AG04450 (cell line): ENCODE measurements at regions of chr2 and their contacts with region 1.

Region 1: DNA sequence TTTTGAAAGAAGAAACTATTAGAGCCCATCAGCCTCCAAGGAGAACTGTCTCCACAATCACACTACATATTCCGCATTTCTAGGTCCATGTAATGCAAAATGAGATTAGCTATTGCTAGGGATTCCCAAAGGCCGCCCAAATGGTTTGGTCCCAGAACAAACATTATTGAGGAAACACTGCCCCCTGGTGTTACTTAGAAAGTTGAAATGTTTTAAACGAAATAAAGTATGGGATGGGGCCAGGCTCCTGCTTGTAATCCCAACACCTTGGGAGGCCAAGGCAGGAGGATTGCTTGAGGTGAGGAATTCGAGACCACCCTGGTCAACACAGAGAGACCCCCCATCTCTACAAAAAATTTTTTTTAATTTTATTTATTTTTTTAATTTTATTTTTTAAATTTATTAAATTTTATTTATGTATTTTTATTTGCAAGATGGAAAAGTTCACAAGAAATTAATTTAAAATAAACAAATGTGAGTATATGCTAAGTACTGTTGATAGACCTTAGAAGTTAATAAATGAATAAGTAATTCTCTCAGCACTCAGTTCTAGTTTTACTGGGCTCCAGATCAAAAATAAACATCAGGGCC is 5.5 kb downstream of the NHEJ1 start:
- DNase-seq: peak; percentile 34
- H3K4me3 ChIP-seq: no peak overlapping the region
- H3K27ac ChIP-seq: no peak overlapping the region
- H3K27me3 ChIP-seq: no peaks in the 10 kb centered on the region
- CTCF ChIP-seq: peak; percentile 58

Region 2: GRCh38 chr2:218876562-218877219 is 278.5 kb before region 1 on chr2:
- CTCF ChIA-PET with region 1: interaction called, 14 read pairs
- POLR2A ChIA-PET with region 1: no interaction called
- DNase-seq: no peak
- H3K4me3 ChIP-seq: no peak overlapping the region
- H3K27ac ChIP-seq: no peak overlapping the region
- H3K27me3 ChIP-seq: peaks cover 83% of the 10 kb centered on the region
- CTCF ChIP-seq: peak; percentile 97

Region 3: GRCh38 chr2:218962859-218963492 is 192.2 kb before region 1 on chr2:
- CTCF ChIA-PET with region 1: no interaction called
- POLR2A ChIA-PET with region 1: no interaction called
- DNase-seq: no peak
- H3K4me3 ChIP-seq: peak overlapping the region; percentile 41
- H3K27ac ChIP-seq: peak overlapping the region; percentile 85
- H3K27me3 ChIP-seq: peaks cover 41% of the 10 kb centered on the region
- CTCF ChIP-seq: no peak

Region 4: GRCh38 chr2:218979846-218980734 is 175.1 kb before region 1 on chr2:
- CTCF ChIA-PET with region 1: interaction called, 13 read pairs
- POLR2A ChIA-PET with region 1: no interaction called
- DNase-seq: no peak
- H3K4me3 ChIP-seq: peak overlapping the region; percentile 42
- H3K27ac ChIP-seq: no peak overlapping the region
- H3K27me3 ChIP-seq: peaks cover 69% of the 10 kb centered on the region
- CTCF ChIP-seq: peak; percentile 86

Region 5: DNA sequence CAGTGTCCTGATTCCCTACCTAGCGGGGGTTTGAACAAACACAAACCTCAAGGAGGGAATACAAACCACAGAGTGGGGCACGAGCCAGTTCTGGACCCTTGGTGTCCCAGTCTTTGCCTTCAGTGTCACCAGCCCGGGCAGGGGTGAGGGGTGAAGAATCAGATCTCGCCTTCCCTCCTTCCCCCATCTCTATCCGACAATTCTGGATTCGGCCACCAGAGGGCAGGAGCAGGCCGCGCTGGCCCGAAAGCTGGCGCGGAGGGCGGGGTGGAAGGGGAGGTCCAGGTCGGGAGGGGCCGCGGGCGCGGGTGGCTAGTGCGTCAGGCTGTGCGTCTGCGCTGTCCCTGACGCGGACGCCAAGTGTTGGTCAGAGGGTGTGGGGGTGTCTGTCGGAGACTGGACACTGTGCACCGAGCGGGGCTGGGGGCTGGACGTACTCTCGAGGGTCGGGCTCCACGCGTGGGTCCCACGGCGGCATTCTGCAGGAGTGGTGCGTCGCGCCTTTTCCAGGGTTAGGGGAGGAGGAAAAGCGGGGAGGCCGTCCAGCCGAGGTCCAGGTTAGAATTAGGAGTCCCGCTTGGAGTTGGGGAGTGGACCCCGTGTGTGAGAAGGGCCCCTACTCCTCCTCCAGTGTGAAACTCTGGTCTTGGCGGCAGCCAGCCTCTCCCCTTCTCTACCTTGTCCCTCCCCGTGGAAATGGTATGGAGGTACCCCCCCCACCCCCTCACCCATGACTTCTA is 159.0 kb before region 1 on chr2:
- CTCF ChIA-PET with region 1: interaction called, 17 read pairs
- POLR2A ChIA-PET with region 1: no interaction called
- DNase-seq: peak; percentile 27
- H3K4me3 ChIP-seq: peak overlapping the region; percentile 52
- H3K27ac ChIP-seq: no peak overlapping the region
- H3K27me3 ChIP-seq: peaks cover 82% of the 10 kb centered on the region
- CTCF ChIP-seq: peak; percentile 89

Region 6: DNA sequence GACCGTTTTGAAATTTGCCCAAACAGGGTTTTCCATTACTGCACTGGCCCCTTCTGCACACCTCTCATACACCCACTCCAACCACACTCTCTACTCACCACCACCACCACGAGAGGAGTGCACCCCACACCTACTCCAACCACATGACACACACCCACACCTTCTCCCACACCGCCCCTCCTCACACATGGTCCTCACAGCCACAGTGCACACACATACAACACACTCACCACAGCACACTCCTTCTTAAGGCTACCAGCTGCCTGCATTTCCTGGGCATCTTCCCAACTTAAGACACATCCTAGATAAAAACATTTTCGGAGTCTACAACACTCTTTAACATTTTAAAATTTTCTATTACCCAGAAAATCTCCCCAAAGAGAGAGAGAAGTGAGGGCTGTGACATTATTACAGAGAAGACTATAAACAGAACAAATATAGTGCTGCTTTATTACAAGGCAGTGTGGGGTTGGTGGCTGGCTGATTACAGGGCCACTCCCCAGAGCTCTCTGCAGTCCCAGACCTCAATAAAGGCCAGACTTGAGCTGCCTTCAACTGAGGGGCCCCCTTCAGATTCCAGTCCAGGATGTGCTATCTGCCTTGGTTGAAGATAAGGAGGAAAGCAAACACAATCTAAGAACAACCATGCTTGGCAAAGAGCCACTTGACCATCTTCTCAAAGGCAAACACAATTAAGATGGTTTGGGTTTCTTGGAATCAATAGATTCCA is 30.6 kb before region 1 on chr2:
- CTCF ChIA-PET with region 1: interaction called, 31 read pairs
- POLR2A ChIA-PET with region 1: interaction called, 8 read pairs
- DNase-seq: no peak
- H3K4me3 ChIP-seq: no peak overlapping the region
- H3K27ac ChIP-seq: no peak overlapping the region
- H3K27me3 ChIP-seq: no peaks in the 10 kb centered on the region
- CTCF ChIP-seq: no peak

Region 7: DNA sequence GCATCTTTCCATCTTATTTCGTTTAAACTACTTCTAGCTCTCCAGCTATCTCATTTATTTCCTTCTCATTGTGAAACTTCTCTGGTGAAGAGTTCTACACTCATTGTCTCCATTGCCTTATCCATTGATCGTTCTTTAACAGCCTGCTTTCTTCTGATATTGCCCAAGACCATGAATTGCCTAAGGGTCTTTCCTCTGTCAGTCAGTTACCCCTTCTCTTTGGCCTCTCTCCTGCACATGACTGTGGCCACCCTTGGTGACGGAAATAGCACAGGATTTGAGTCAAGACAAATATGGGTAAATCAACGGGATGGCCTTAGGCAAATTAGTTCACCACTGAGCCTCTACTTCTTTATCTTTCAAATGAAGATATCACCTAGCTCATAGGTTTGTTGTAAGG is 21.2 kb before region 1 on chr2:
- CTCF ChIA-PET with region 1: interaction called, 10 read pairs
- POLR2A ChIA-PET with region 1: no interaction called
- DNase-seq: no peak
- H3K4me3 ChIP-seq: no peak overlapping the region
- H3K27ac ChIP-seq: no peak overlapping the region
- H3K27me3 ChIP-seq: no peaks in the 10 kb centered on the region
- CTCF ChIP-seq: no peak

Region 8: GRCh38 chr2:219142329-219142728 is 12.8 kb before region 1 on chr2:
- CTCF ChIA-PET with region 1: interaction called, 22 read pairs
- POLR2A ChIA-PET with region 1: no interaction called
- DNase-seq: peak; percentile 32
- H3K4me3 ChIP-seq: no peak overlapping the region
- H3K27ac ChIP-seq: peak overlapping the region; percentile 11
- H3K27me3 ChIP-seq: no peaks in the 10 kb centered on the region
- CTCF ChIP-seq: peak; percentile 35; the same call in 1 of the 2 replicates